GM12878 (cell line): ENCODE measurements at regions of chr10 and their contacts with region 1.

Region 1: DNA sequence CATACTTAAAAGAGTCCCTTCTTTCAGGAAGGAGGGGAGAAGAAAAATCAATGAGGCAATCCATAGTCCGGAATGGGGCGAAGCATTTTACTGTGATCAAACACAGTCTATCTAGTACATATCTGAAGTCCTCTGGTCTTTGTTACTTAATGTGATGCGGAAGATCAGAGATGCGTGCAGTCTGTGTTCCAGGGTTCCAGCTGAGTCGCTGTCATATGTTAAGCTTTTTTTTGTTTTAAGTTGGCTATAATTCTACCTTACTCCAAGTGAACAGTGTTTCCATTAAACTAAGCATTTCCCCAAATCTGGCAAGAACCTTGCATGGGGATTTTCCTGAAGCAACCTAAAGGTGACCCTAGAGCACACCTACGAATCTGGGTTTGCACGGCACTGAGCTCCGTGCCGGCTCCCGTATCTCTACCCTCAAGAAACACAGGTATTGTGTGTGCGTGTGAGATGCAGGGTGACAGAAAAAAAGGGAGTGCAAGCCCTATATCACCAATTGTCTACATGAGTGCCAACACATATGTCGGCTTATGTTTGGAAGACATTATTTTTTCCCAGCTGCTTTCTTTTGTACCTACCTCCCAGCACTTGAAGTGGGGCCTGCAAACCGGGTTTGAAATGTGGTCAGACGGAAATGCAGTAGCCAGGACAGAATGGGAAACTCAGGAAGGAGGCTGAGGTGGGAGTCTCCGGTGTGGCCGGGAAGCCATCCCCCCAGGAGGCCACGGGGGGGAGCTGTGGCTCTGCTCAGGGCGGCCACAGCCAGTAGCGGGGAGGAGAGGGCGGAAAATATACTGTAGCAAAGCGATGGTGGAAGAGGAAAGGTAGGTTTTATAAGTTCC is 435.8 kb upstream of the MGMT start:
- DNase-seq: no peak
- ATAC-seq: peak; percentile 89
- H3K4me3 ChIP-seq: no peak overlapping the region
- H3K27ac ChIP-seq: no peak overlapping the region
- H3K4me1 ChIP-seq: no peaks in the 10 kb centered on the region
- H3K27me3 ChIP-seq: no peaks in the 10 kb centered on the region; a peak in 1 of 4 replicates
- CTCF ChIP-seq: peak; percentile 73 to 84 (median 82)
- EP300 ChIP-seq: no peak
- POLR2A ChIP-seq: no peak
- RAD21 ChIP-seq: peak; percentile 78

Region 2: DNA sequence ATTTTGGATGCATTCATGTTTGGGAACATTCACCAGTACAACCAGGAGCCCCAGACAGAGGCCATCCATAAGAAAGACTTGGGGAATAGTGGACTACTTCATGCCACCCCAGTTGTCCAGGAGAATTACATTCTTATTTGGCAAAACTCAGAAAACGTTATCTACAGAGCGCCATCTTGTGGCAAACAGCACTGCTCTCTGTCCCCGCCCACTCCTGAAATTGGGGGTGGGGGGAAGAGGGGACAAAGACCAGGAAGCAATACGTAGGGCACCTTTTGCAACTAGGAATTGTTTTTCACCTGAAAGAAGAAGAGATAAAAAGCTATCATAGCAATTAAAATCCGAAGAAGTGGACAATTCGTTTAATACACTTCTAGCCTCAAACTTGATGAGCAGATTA is 301.3 kb after region 1 on chr10:
- CTCF ChIA-PET with region 1: no interaction called
- POLR2A ChIA-PET with region 1: no interaction called
- RAD21 ChIA-PET with region 1: no interaction called
- SMC1A ChIA-PET with region 1: no interaction called
- in situ Hi-C with region 1: no loop called
- intact Hi-C with region 1: loop called (anchors 2 kb)
- DNase-seq: no peak
- ATAC-seq: no peak
- H3K4me3 ChIP-seq: no peak overlapping the region
- H3K27ac ChIP-seq: no peak overlapping the region
- H3K4me1 ChIP-seq: no peaks in the 10 kb centered on the region
- H3K27me3 ChIP-seq: no peaks in the 10 kb centered on the region
- CTCF ChIP-seq: peak; percentile 10 to 32 (median 19); a peak in 3 of 6 replicates
- EP300 ChIP-seq: no peak
- POLR2A ChIP-seq: no peak
- RAD21 ChIP-seq: peak; percentile 14; the same call in 1 of the 2 replicates

Region 3: GRCh38 chr10:129968853-129969183 is 937.6 kb after region 1 on chr10:
- CTCF ChIA-PET with region 1: no interaction called
- POLR2A ChIA-PET with region 1: no interaction called
- RAD21 ChIA-PET with region 1: no interaction called
- SMC1A ChIA-PET with region 1: no interaction called
- in situ Hi-C with region 1: no loop called
- intact Hi-C with region 1: loop called (anchors 5 kb)
- DNase-seq: no peak
- ATAC-seq: 0 out of 3 replicates have a peak, but pooled peaks have one; percentile 36
- H3K4me3 ChIP-seq: no peak overlapping the region
- H3K27ac ChIP-seq: no peak overlapping the region
- H3K4me1 ChIP-seq: no peaks in the 10 kb centered on the region
- H3K27me3 ChIP-seq: peaks cover 7 to 26% of the 10 kb centered on the region in 2 experiments
- CTCF ChIP-seq: peak; percentile 18 to 22 (median 20); a peak in 3 of 6 replicates
- EP300 ChIP-seq: no peak
- POLR2A ChIP-seq: no peak
- RAD21 ChIP-seq: 0 out of 2 replicates have a peak, but pooled peaks have one; percentile 1